Activated CD8-positive, alpha-beta T cell treated with anti-CD3 and anti-CD28 coated beads for 36 hours (primary cell): ENCODE measurements at regions of chr1 and their contacts with region 1.

Region 1: DNA sequence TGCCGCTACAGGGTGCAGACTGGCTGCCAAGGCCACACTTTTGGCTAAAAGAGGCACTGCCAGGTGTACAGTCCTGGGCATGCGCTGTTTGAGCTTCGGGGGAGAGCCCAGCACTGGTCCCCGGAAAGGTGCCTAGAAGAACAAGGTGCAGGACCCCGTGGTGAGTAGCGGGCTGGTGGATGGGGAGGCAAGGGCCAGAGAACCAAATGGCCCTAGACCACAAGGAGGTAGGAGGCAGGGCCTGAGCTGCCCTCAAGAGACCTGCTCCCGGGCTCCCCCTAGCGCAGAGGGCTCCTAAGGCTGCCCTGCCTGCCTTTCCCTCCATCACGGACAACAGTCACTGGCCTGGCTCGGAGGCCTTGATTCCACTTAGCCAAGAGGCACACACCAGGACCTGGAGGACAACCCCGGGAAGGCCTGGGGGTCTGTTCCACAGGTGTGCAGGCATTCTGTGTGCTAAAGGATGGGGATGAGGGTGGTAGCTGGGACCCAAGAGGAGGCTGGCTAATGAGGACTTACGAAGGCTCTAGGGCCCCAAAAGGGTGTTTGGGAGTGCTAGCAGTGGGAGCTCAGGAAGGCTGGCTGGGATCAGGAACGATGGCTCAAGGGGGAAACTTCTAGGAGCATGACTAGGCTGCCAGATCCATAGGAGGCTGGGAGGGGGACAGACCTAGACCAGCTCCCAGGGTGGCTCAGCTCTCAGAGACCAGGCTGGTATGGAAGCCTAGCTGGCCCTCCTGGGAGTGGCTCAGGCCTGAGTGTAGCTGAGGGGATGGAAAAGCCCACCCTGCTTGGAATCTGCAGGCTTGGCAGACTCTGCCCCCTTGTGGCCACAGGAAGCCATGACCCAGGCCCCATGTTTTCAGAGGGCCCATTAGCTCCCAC is 742 bp downstream of the ARTN start:
- DNase-seq: peak; percentile 76
- ATAC-seq: peak; percentile 64
- H3K4me3 Mint-ChIP-seq: peak overlapping the region; percentile 41
- H3K27ac Mint-ChIP-seq: no peak overlapping the region
- H3K4me1 Mint-ChIP-seq: peaks cover 24% of the 10 kb centered on the region
- H3K27me3 Mint-ChIP-seq: peaks cover 25% of the 10 kb centered on the region
- CTCF ChIP-seq: peak; percentile 79

Region 2: GRCh38 chr1:43529206-43529731 is 405.1 kb before region 1 on chr1:
- CTCF ChIA-PET with region 1: interaction called, 19 read pairs
- POLR2A ChIA-PET with region 1: no interaction called
- intact Hi-C with region 1: loop called (anchors 5 kb)
- DNase-seq: peak; percentile 89
- ATAC-seq: peak; percentile 81
- H3K4me3 Mint-ChIP-seq: no peak overlapping the region
- H3K27ac Mint-ChIP-seq: no peak overlapping the region
- H3K4me1 Mint-ChIP-seq: peaks cover 14% of the 10 kb centered on the region
- H3K27me3 Mint-ChIP-seq: peaks cover 34% of the 10 kb centered on the region
- CTCF ChIP-seq: peak; percentile 95

Region 3: GRCh38 chr1:43565600-43566360 is 368.6 kb before region 1 on chr1:
- CTCF ChIA-PET with region 1: no interaction called
- POLR2A ChIA-PET with region 1: no interaction called
- intact Hi-C with region 1: no loop called
- DNase-seq: peak; percentile 69
- ATAC-seq: peak; percentile 93
- H3K4me3 Mint-ChIP-seq: peak overlapping the region; percentile 65
- H3K27ac Mint-ChIP-seq: no peak overlapping the region
- H3K4me1 Mint-ChIP-seq: peaks cover 12% of the 10 kb centered on the region
- H3K27me3 Mint-ChIP-seq: peaks cover 12% of the 10 kb centered on the region
- CTCF ChIP-seq: no peak

Region 4: DNA sequence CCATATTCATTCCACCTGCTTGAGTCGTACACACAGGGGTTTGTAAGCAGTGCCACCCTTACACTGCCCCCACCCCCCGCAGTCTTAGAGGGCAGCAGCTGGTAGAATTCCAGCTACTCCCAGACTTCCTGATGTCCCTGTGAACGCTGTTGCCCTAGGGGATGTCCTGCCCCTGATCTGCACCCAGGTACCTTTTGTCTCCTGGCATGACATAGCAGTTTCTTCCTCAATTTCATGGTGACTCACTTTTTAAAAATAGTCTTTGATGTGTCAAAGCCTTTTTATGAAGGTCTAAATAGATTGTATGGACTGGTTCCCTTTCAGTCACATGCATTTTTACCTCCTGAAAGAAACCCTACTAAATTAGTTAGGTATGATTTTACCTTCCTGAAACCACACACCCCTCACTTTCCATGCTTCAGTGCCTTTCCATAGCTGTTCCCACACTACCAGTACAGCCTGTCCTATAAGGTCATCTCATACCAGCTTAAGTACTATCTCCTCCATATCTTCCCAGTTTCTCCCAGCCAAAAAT is 150.6 kb before region 1 on chr1:
- CTCF ChIA-PET with region 1: interaction called, 10 read pairs
- POLR2A ChIA-PET with region 1: no interaction called
- intact Hi-C with region 1: no loop called
- DNase-seq: no peak
- ATAC-seq: no peak
- H3K4me3 Mint-ChIP-seq: no peak overlapping the region
- H3K27ac Mint-ChIP-seq: no peak overlapping the region
- H3K4me1 Mint-ChIP-seq: peaks cover 17% of the 10 kb centered on the region
- H3K27me3 Mint-ChIP-seq: no peaks in the 10 kb centered on the region
- CTCF ChIP-seq: no peak

Region 5: GRCh38 chr1:43901171-43901961 is 33.0 kb before region 1 on chr1:
- CTCF ChIA-PET with region 1: interaction called, 16 read pairs
- POLR2A ChIA-PET with region 1: interaction called, 3 read pairs
- intact Hi-C with region 1: no loop called
- DNase-seq: no peak
- ATAC-seq: no peak
- H3K4me3 Mint-ChIP-seq: no peak overlapping the region
- H3K27ac Mint-ChIP-seq: no peak overlapping the region
- H3K4me1 Mint-ChIP-seq: no peaks in the 10 kb centered on the region
- H3K27me3 Mint-ChIP-seq: no peaks in the 10 kb centered on the region
- CTCF ChIP-seq: no peak

Region 6: DNA sequence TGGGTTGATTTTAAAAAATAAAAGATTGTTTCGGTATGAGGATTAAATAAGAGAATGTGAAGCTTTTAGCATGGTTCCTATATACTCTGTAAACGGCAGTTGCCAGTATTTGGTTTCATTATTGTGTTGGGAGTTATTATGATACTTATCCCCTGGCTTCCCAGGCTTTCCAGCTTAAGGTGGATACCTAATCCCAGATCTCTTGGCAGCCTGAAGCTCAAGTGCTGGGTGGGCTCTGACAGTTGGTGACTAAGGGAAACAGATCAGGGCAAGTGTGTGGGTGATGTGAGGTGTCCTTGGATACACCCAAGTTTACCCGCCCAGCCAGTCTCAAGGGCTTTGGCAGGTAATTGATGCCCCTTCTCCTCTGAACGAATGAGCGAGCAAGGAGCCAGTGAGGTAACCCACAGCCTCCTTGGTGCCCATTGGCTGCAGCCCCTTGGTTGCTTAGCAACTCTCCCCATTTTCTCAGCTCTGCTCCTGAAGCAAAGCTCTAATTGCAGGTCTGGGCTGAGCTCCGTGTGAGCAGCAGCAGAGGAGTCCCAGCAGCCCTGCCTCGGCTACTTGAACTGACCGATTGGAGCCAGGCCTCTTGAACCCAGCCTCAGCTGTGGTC is 18.5 kb after region 1 on chr1:
- CTCF ChIA-PET with region 1: interaction called, 185 read pairs
- POLR2A ChIA-PET with region 1: interaction called, 4 read pairs
- intact Hi-C with region 1: no loop called
- DNase-seq: no peak
- ATAC-seq: no peak
- H3K4me3 Mint-ChIP-seq: no peak overlapping the region
- H3K27ac Mint-ChIP-seq: no peak overlapping the region
- H3K4me1 Mint-ChIP-seq: peaks cover 22% of the 10 kb centered on the region
- H3K27me3 Mint-ChIP-seq: no peaks in the 10 kb centered on the region
- CTCF ChIP-seq: no peak

Region 7: DNA sequence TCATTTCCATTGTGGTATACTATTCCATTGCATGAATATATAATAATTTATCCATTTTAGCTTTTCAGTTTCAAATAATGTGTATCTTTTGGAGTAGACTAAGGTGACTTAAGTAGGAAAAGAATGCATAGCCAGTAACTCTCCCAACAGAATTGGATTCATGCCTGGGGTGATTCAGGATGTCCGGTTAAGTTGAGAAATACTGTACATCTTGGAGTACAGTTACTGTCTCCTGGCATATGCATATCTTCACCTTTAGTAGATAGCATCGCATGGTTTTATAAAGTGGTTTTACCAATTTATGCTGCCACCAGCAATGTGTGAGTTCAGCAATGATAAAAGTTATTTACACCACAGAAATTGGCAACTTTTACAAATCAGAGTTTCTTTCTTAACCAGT is 115.5 kb after region 1 on chr1:
- CTCF ChIA-PET with region 1: interaction called, 12 read pairs
- POLR2A ChIA-PET with region 1: no interaction called
- intact Hi-C with region 1: no loop called
- DNase-seq: no peak
- ATAC-seq: no peak
- H3K4me3 Mint-ChIP-seq: no peak overlapping the region
- H3K27ac Mint-ChIP-seq: no peak overlapping the region
- H3K4me1 Mint-ChIP-seq: peaks cover 18% of the 10 kb centered on the region
- H3K27me3 Mint-ChIP-seq: peaks cover 3% of the 10 kb centered on the region
- CTCF ChIP-seq: no peak